ENCODE measurements at regions of chr6 and their contacts with region 1.

Region 1: GRCh38 chr6:44338228-44339122 is 4.0 kb upstream of the SPATS1 start:
- DNase-seq: peak; percentile 77
- CTCF ChIP-seq: peak; percentile 84

Region 2: DNA sequence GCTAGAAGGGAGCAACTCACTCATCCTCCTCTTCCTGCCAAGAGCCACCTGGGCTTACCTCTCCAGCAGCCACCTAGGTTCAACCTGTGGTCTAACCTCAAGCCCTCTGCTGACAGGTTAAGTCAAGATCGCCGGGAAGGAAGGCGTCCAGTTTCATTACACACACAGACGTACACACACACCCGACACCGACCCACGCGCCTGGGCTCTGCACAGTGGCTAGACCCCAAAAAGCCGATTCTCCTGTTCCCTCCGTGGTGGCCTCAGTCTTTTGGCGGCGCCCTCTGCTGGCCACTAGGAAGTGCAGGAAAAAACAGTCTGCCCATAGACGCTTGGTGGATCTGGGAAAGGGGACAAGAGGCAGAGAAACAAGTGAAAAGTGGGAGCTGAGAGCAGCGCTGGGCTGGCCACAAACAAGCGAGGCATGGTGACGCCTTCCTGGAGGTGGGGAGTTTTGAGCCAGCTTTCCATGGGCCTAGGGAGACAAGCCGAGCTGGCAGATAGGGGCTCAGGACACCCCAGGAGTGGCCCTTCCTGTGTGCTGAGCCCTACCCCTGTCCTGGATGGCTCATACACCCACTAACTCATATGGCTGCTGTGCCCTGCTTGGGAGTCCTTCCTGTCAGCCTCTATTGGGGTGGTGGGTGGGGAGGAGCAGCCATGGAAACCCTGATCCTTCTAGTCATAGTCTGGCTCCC is 263.9 kb before region 1 on chr6:
- CTCF ChIA-PET with region 1: no interaction called
- POLR2A ChIA-PET with region 1: no interaction called
- DNase-seq: peak; percentile 85
- CTCF ChIP-seq: peak; percentile 97

Region 3: DNA sequence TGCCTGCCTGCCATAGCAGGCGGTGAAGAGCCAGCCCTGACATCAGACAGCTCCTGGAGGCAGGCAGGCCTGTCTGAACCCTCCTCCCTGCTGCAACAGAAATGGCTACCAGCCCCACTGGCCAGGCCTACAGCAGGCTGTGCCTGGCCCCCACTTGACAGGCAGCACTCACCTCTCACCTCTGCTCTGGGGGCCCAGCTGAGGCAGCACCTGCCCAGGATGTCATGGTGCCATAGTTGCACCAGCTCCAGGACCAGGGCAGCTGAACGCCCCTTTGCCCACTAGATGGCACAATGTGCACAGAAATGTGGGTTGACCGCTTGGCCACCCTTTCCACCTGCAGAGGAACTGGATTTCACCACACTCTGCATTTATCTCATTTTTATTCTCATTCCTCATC is 241.9 kb before region 1 on chr6:
- CTCF ChIA-PET with region 1: interaction called, 14 read pairs
- POLR2A ChIA-PET with region 1: no interaction called
- DNase-seq: peak; percentile 86
- CTCF ChIP-seq: peak; percentile 87

Region 4: GRCh38 chr6:44291841-44292240 is 46.6 kb before region 1 on chr6:
- CTCF ChIA-PET with region 1: interaction called, 15 read pairs
- POLR2A ChIA-PET with region 1: interaction called, 6 read pairs
- DNase-seq: no peak
- CTCF ChIP-seq: no peak

Region 5: DNA sequence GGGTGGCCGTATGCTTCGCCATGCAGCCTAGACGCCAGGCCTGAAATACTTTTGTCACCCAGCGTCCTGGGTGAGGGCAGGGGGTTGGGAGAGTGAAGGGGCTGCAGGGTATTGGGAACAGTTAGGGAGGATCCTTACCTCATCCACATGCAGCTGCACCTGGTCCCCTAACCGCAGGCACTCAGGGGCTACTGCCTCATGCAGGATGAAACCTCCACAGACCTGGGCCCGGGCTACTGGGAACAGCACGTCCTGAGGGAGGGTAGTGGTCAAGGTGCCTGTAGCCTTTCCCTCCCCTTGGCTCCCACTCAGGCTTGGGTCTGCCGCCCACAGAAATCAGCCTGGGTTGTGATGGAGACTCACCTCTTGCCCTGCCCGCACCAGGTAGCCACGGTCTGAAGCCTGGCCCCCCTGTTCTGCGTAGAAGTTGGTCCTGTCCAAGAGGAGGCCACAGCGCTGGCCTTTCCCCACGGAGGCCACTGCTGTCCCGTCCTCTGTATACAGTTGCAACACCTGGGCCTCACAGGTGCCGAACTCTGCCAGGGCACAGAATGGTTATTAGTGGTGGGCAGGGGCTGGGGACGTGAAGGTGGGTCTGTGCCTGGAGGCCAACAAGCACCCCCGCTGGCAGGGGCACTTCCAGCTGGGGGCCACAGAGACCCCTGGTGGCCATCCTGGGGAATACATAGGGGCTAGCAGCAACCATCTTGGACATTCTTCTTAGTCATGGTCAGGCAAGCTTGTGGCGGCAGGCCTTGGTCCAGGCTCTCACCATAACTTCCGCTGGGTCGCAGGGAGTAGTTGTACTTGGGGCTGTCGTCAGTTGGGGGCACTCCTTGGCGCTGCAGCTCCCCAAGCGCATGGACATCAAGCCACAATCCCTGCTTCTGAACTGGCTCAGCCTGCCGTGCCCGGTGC is 33.9 kb before region 1 on chr6:
- CTCF ChIA-PET with region 1: interaction called, 11 read pairs
- POLR2A ChIA-PET with region 1: no interaction called
- DNase-seq: peak; percentile 79
- CTCF ChIP-seq: peak; percentile 73

Region 6: GRCh38 chr6:44327096-44327495 is 11.4 kb before region 1 on chr6:
- CTCF ChIA-PET with region 1: interaction called, 14 read pairs
- POLR2A ChIA-PET with region 1: no interaction called
- DNase-seq: no peak
- CTCF ChIP-seq: no peak

Region 7: DNA sequence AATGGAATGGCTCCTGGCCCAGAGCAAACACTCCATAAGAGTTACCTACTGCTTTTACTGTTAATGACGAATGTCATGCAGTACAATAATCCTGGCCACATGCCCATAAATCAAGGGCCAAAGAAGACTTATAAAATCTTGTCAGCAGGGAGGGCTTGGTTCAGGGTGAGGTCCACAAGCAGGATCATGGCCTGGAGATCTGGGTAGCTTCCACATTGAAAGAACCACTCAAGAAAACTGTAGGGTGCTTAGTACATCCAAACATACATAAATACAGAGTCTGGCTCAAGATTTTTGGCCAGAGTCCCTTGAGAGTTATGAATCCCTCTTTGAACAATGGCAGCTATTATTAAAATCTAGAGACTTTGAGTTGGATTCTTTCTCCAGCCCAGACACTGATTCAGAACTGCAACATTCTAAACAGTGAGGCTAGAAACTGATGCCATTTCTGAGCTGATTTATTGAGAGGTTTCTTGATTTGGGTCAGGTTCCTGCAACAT is 237.7 kb after region 1 on chr6:
- CTCF ChIA-PET with region 1: no interaction called
- POLR2A ChIA-PET with region 1: no interaction called
- DNase-seq: no peak
- CTCF ChIP-seq: no peak

Region 8: DNA sequence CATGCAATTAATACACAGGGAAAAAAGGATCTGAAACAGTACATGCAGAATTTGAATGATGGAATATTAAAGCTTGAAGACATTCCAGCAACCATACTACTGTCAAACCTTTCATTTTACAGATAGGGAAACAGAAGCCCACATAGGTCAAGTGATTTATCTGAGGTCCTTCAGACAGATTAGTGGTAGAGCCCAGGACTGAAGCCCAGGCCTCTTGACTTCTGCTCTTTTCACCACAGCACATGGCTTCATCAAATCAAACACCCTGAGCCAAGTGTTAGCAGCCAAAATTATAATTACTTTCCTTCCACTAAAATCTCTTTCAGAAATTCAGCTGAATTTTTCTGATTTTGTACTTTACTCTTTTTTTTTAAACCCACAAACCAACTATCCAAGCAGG is 554.1 kb after region 1 on chr6:
- CTCF ChIA-PET with region 1: no interaction called
- POLR2A ChIA-PET with region 1: no interaction called
- DNase-seq: no peak
- CTCF ChIP-seq: no peak